ENCODE measurements at regions of chr18 and their contacts with region 1.

Region 1: DNA sequence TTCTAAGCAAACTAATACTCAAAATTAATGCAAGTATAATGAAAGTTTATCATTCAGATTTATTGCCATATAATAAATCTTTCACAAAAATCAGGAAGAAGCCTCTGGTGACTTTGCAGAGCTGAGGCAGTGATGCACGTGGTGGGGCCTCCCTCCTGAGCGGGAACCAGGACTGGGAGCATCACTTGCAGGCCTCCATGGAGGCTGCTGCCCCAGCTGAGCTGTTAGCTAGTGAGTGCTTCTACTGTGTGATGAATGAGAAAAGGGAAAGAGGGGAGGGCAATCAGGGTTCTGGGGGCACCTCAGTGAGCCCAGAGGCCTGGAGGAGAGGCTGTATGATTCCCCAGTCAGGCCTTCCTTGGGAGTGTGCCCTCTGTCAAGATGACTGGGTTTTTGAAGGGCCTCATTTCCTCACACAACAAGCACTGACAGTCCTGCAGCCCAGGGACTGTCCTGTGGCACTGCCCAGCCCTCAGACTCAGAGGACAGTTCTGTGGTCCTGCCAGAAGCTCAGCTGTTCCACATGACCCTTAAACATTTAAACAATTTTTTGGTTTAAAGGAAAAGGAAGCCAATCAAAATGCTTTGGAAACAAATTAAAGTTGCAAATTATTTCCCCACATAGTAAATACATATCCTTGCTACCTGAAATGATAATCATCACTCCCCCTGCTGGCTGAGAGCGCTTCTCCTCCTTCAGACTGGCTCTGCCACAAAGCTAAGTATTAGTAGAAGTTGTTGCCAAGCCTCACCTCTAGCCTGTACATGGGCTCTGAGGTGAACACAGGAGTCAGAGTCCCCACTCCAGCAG is 90.9 kb upstream of the SMAD7 start:
- DNase-seq: no peak
- H3K4me3 Mint-ChIP-seq: no peak overlapping the region
- H3K27ac Mint-ChIP-seq: no peak overlapping the region
- H3K4me1 Mint-ChIP-seq: peaks cover 6% of the 10 kb centered on the region
- H3K27me3 Mint-ChIP-seq: no peaks in the 10 kb centered on the region

Region 2: GRCh38 chr18:49055754-49056172 is 14.1 kb after region 1 on chr18:
- intact Hi-C with region 1: loop called (anchors 1 kb)
- DNase-seq: no peak
- H3K4me3 Mint-ChIP-seq: peak overlapping the region; percentile 37
- H3K27ac Mint-ChIP-seq: peak overlapping the region; percentile 67
- H3K4me1 Mint-ChIP-seq: peaks cover 34% of the 10 kb centered on the region
- H3K27me3 Mint-ChIP-seq: no peaks in the 10 kb centered on the region

Measured in activated T-helper 1 cell treated with anti-CD3 and anti-CD28 coated beads, Interleukin-12 subunit alpha, Interleukin-12 subunit beta, Interleukin-2, Interleukin-4 antibody, amounts not matched to agents 30 ng/mL and 10 ng/mL and 1 ng/mL, durations not matched to agents 14 hours and 24 hours and 36 hours (primary cell).